Activated T-helper 2 cell treated with anti-CD3 and anti-CD28 coated beads, Interferon-gamma antibody, Interleukin-2, Interleukin-4, amounts not matched to agents 10 μg/mL and 5 μg/mL and 100 μg/mL, durations not matched to agents 14 hours and 24 hours and 36 hours (primary cell): ENCODE measurements at regions of chr22 and their contacts with region 1.

Region 1: GRCh38 chr22:31829505-31829904 is 75.7 kb downstream of the DEPDC5 start:
- DNase-seq: peak; percentile 16
- H3K4me3 Mint-ChIP-seq: no peak overlapping the region
- H3K27ac Mint-ChIP-seq: peak overlapping the region; percentile 86
- H3K4me1 Mint-ChIP-seq: peaks cover 32% of the 10 kb centered on the region
- H3K27me3 Mint-ChIP-seq: no peaks in the 10 kb centered on the region

Region 2: DNA sequence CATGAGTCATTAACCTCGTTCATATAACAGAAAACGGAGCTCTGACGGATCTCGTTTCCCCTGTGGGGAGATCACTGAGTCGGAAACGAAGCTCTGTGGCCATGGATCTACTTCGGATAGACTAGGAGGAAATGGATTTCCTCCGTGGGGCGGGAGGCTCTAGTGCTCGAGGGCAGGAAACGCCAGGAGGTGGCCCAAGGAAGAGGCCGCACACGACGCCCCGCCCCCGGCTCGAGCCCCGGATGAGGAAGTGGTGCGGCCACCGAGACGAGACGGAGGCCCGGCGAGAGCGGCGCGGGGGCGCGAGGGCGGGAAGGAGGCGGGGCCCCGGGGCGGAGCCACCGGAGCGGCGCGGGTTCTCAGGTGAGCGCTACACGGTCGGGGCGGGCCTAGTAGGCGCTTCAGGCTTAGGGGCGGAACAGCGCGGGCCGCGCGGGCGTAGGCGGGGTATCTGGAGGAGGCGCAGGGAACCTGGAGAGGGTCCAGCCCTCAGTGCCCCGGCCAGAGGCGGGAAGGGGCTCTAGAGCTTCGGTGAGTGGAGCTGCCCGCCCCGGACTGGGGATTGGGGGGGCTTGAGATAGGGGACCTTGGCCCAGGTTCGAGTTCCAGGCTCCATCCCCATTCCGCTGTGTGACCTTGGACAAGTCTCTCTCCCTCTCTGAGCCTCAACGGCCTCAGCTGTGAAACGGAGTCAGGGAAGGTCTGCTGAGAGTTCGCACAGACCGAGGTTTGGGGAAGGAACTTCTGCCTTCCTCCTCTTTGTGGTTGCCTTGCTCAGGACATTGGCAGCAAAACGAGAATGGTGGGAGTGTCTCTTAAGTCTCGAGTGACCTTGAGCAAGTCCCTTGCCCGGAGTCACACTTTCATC is 75.6 kb before region 1 on chr22 and contains the start of gene DEPDC5:
- intact Hi-C with region 1: no loop called
- DNase-seq: peak; percentile 97
- H3K4me3 Mint-ChIP-seq: peak within 1 kb of the TSS; percentile 81
- H3K27ac Mint-ChIP-seq: peak within 1 kb of the TSS; percentile 99
- H3K4me1 Mint-ChIP-seq: peaks cover 37% of the 10 kb centered on the region
- H3K27me3 Mint-ChIP-seq: no peaks in the 10 kb centered on the region
- total RNA-seq, gene DEPDC5: 33.2 and 37.6 TPM in 2 replicates

Region 3: GRCh38 chr22:31818481-31819392 is 10.8 kb before region 1 on chr22:
- intact Hi-C with region 1: loop called (anchors 1 kb)
- DNase-seq: no peak
- H3K4me3 Mint-ChIP-seq: no peak overlapping the region
- H3K27ac Mint-ChIP-seq: peak overlapping the region; percentile 28
- H3K4me1 Mint-ChIP-seq: peaks cover 19% of the 10 kb centered on the region
- H3K27me3 Mint-ChIP-seq: no peaks in the 10 kb centered on the region

Region 4: DNA sequence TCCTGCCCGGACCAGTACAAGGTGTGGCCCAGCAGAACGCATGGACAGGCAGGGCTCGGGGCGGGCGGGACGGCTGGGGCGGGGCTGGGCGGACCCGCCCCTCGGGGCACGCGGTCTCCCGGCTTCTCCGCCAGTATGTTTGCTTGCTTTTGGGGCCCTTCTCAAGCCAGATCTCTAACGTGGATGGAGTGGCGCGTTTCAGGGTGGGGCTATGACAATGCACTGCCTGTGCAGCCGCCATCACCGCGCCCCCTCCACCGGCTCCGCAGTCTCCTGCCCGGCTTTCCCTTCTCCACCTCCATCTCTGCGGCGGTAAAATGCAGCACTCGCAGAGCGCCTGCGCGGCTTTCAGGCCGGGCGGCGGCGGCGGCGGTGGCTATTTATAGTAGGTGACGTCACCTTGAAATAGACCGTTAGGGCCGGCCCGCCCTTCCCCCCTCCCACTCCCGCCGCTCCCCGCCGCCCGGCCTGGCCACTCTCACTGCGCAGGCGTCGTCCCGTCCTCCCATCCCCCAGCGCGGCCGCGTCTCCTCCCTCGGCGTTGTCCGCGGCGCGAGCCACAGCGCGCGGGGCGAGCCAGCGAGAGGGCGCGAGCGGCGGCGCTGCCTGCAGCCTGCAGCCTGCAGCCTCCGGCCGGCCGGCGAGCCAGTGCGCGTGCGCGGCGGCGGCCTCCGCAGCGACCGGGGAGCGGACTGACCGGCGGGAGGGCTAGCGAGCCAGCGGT is 114.6 kb after region 1 on chr22 and contains the start of gene YWHAH:
- intact Hi-C with region 1: loop called (anchors 1 kb)
- DNase-seq: peak; percentile 89
- H3K4me3 Mint-ChIP-seq: peak within 1 kb of the TSS; percentile 88
- H3K27ac Mint-ChIP-seq: peak within 1 kb of the TSS; percentile 91
- H3K4me1 Mint-ChIP-seq: peaks cover 19% of the 10 kb centered on the region
- H3K27me3 Mint-ChIP-seq: no peaks in the 10 kb centered on the region
- total RNA-seq, gene YWHAH: 150 TPM in 2 replicates